Heart right ventricle (tissue), 16 donors: ENCODE measurements at regions of chr14 and their contacts with region 1.

Region 1: DNA sequence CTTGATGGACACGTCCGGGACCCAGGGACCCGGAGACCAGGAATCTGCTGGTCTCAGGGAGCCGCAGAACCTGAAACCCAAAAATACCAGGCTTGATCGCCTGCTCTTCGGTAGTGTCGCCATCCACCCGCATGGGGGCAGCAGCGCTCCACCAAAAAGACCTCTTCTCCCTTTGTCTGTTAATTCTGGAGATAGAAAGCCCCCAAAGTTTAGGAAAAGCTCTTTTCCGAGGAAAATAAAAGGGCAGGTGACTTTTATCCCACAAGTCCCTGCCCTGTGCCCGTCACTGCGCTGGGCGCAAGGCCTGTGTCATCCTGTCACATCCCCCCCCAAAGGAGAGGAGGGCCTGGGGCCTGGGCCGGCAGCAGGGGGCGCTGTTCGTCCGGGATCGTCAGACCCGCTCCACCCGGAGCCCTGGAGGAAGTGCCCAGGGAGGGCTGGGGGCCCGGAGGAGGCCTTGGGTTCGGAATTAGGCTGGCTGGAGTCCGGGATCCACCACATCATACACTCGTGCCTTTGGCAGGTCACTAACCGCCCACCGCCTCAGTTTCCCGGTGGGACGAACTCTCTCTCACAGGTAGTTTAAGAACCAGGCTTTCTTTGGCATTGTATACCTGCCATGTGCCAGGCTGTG is 31.9 kb downstream of the DAD1 start:
- DNase-seq: peak; percentile 85 to 88
- ATAC-seq: peak; percentile 87 to 92 (median 90)
- H3K4me3 ChIP-seq: peak overlapping the region in 8 of 10 donors; percentile 28 to 51 (median 40)
- H3K27ac ChIP-seq: peak overlapping the region in 9 of 10 donors; percentile 37 to 91 (median 60)
- H3K4me1 ChIP-seq: peaks cover 8 to 81% (median 36%) of the 10 kb centered on the region in 9 donors
- H3K27me3 ChIP-seq: no peaks in the 10 kb centered on the region
- CTCF ChIP-seq: peak in 8 of 9 donors; percentile 95 to 100 (median 98)

Region 2: GRCh38 chr14:22483863-22484593 is 73.1 kb before region 1 on chr14:
- intact Hi-C with region 1: loop called in 2 of 10 experiments (anchors 5 kb)
- DNase-seq: no peak
- ATAC-seq: peak in 4 of 8 donors; percentile 8 to 30 (median 18)
- H3K4me3 ChIP-seq: no peak overlapping the region
- H3K27ac ChIP-seq: peak overlapping the region in 8 of 10 donors; percentile 10 to 78 (median 53)
- H3K4me1 ChIP-seq: peaks cover 0 to 97% (median 64%) of the 10 kb centered on the region in 9 donors
- H3K27me3 ChIP-seq: no peaks in the 10 kb centered on the region
- CTCF ChIP-seq: no peak

Region 3: DNA sequence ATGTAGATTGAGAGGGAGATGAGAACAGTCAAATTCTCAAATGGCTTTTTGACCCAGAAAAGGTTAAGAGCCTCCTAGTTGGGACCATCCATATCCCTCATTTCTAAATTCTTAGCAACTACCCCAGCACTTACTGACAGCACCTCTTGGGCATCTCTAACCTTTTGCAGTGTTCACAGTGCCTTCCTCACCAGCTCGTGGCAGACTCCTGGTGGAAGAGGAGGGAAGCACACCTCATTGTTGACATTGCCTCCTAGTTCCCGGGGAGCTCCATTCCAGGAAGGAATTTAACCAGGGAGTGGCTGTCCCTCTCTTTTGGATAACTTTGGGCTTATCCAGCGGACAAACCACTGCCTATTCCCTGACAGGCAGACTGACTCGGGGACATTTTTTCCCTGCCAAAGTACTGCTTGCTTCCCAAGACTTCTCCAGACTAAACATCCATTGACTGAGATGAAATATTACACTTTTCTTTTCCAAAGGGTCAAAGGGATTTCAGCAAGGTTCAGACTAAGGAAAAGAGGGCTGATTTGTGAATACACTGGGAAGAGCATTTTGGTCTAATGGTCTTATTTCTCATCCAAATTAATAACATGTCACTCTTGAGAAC is 96.0 kb after region 1 on chr14:
- intact Hi-C with region 1: loop called in 5 of 10 experiments (anchors 1 to 5 kb)
- DNase-seq: peak; percentile 18 to 55
- ATAC-seq: peak in 7 of 8 donors; percentile 66 to 88 (median 77)
- H3K4me3 ChIP-seq: no peak overlapping the region
- H3K27ac ChIP-seq: no peak overlapping the region
- H3K4me1 ChIP-seq: peaks cover 0 to 9% (median 0%) of the 10 kb centered on the region in 9 donors
- H3K27me3 ChIP-seq: peaks cover 0 to 6% (median 0%) of the 10 kb centered on the region in 7 donors
- CTCF ChIP-seq: peak; percentile 55 to 88 (median 79)

Region 4: DNA sequence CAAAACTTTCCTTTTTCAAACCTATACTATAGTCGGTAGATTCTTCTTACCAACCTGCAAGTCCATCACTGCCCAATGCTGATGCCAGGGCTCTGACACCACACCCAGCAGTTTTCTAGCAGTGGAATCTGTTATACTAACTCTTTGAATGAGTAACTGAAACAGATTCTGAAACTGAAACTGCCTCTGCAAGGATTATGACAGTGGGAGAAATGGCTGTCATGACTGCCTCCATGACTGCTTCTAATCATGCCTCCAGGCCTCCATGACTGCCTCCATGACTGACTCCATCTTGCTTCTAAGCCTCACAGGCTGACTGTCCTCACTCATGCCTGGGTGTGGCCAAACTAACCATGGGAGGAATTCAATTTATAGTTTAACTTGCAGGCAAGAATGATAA is 179.9 kb after region 1 on chr14:
- intact Hi-C with region 1: no loop called
- DNase-seq: no peak
- ATAC-seq: no peak
- H3K4me3 ChIP-seq: no peak overlapping the region
- H3K27ac ChIP-seq: no peak overlapping the region
- H3K4me1 ChIP-seq: peaks cover 0 to 4% (median 0%) of the 10 kb centered on the region in 9 donors
- H3K27me3 ChIP-seq: no peaks in the 10 kb centered on the region
- CTCF ChIP-seq: no peak

Region 5: DNA sequence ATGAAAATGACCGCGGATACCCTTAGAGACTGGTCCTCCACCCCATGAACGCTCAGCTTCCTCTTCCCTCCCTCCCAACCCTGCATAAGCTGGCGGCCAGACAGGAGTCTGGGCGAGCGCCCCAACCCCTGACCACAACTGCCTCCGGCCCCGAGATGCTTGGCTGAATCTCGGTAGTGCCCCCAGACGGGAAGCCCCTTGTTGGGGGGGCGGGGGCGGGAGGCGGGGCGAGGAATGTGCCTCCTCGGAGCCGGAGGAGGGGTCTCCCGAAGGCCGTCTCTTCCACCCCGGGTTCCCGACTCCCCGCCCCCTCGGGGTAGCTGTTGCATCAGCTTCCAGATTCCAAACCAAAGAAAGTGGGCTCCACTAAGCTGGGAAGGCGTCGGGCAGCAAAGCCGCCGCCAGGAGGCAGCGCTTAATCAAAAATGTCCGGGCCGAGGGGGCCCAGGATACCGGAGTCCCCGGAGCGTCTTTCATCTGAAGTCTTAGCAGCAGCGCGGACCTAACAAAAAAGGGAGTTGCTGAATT is 265.5 kb after region 1 on chr14:
- intact Hi-C with region 1: loop called in 7 of 10 experiments (anchors 5 to 10 kb)
- DNase-seq: peak; percentile 76 to 82
- ATAC-seq: peak; percentile 83 to 92 (median 88)
- H3K4me3 ChIP-seq: peak overlapping the region; percentile 16 to 60 (median 48)
- H3K27ac ChIP-seq: peak overlapping the region in 5 of 10 donors; percentile 2 to 82 (median 50)
- H3K4me1 ChIP-seq: peaks cover 3 to 61% (median 34%) of the 10 kb centered on the region in 9 donors
- H3K27me3 ChIP-seq: no peaks in the 10 kb centered on the region
- CTCF ChIP-seq: peak; percentile 72 to 99 (median 94)

Region 6: GRCh38 chr14:22986508-22987054 is 429.5 kb after region 1 on chr14:
- intact Hi-C with region 1: loop called in 3 of 10 experiments (anchors 5 to 10 kb)
- DNase-seq: peak; percentile 77 to 90
- ATAC-seq: peak in 7 of 8 donors; percentile 14 to 52 (median 33)
- H3K4me3 ChIP-seq: no peak overlapping the region
- H3K27ac ChIP-seq: no peak overlapping the region
- H3K4me1 ChIP-seq: peaks cover 0 to 24% (median 14%) of the 10 kb centered on the region in 9 donors
- H3K27me3 ChIP-seq: peaks cover 0 to 7% (median 0%) of the 10 kb centered on the region in 7 donors
- CTCF ChIP-seq: peak; percentile 78 to 96 (median 92)